Pancreas (tissue), 10 donors: ENCODE measurements at regions of chr9 and their contacts with region 1.

Region 1: DNA sequence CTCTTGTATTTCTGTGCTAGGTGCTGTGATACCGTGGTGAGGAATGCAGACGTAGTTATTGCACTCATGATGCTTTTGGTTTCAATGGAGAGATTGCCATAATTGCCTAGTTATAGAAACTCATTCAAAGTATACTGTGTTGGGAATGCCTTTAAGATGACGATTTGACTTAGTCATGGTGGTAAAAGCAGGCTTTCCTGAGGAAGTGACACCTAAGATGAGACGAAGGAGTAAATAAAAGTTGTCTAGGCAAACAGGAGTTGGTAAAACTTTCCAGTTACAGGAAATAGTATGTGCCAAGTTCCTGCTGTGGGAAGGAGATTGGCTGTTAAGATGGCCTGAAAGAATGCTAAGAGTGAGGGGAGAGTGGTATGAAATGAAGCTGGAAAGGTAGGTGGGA is 48.1 kb downstream of the FOCAD start:
- DNase-seq: no peak
- ATAC-seq: no peak
- H3K4me3 ChIP-seq: no peak overlapping the region
- H3K27ac ChIP-seq: no peak overlapping the region
- H3K4me1 ChIP-seq: no peaks in the 10 kb centered on the region
- H3K27me3 ChIP-seq: no peaks in the 10 kb centered on the region
- CTCF ChIP-seq: no peak

Region 2: DNA sequence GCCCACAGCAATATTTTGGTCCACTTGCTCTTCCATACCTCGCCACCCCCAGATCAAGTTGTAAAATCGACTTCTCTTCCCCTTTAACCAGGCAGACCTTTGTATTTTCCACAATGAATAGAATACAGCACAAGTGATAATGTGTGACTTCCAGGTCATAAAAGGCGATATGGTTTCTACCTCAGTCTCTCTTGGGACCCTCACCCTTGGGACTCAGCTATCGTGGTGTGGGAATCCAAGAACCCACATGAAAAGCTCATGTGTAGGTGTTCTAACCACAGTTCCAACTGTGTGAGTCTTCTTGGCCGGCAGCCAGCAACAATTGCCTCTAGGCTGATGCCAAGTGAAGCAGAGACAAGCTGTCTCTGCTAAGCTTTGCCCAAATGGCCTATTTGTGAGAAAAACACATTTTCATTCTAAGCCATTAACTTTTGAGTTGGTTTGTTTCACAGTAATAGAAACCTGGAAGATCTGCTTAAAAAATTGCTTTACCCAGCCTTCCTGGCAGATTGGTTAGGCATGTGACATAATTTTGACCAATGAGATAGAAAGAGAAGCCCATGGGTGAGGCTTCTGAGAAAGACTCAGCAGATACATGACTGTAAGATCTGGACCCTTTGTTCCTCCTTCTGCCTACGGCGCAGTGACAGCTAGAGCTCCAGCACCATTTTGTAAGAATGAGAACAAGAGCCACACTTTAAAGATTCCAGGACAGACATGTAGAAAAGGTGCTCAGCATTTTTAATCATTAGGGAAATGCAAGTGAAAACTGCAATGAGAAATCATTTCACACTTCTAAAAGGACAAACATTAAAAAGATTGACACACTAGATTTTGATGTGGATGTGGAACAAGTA is 91.6 kb before region 1 on chr9:
- intact Hi-C with region 1: no loop called
- DNase-seq: peak in 5 of 6 donors; percentile 31 to 82 (median 63)
- ATAC-seq: peak in 1 of 4 donors; percentile 58
- H3K4me3 ChIP-seq: no peak overlapping the region
- H3K27ac ChIP-seq: no peak overlapping the region
- H3K4me1 ChIP-seq: no peaks in the 10 kb centered on the region
- H3K27me3 ChIP-seq: no peaks in the 10 kb centered on the region
- CTCF ChIP-seq: no peak

Region 3: DNA sequence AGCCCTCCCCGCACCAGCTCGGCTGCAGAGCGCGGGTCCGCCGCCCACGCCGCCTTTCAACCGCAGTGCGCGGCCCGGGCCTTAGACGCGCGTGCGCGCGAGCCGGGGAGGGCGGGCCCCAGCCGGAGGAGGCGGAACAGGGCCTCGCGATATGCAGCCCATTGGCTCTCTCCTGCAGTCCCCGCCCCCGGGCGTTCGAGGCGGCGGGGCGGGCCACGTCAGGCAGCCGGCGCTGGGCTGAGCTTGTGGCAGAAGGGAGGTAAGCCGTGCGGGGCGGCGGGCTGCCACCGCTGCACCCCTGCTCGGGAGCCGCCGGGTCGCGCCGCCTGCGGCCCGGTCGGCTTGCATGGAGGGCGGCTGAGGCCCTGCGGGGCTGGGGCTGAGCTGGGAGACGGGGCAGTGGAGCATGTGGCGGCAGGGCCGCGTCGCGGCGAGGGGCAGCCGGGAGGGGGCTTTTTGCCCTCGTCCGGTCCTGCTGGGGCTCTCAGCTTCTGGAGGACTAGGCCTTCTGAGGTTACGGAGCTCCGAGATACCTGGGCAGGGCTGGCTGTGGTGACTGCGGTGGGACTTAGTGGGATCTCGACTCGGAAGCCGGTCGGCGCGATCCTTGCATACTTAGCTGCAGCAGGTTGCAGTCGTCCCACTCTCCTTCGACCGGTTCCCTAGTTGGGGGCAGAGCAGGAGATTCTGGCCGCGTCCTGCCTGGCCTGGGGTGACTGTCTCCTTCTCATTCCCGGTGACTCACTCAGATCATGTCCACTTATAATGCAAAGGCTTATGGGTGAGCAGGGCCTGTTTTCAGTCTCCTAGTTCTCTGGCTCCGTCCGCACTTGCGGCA is 47.9 kb before region 1 on chr9 and contains the start of gene FOCAD:
- intact Hi-C with region 1: loop called in 1 of 3 experiments (anchors 10 kb)
- DNase-seq: peak; percentile 94 to 98 (median 96)
- ATAC-seq: peak; percentile 95 to 99 (median 98)
- H3K4me3 ChIP-seq: peak within 1 kb of the TSS; percentile 75 to 96 (median 81)
- H3K27ac ChIP-seq: peak within 1 kb of the TSS; percentile 86 to 97 (median 89)
- H3K4me1 ChIP-seq: peaks cover 9 to 19% (median 15%) of the 10 kb centered on the region in 3 donors
- H3K27me3 ChIP-seq: no peaks in the 10 kb centered on the region
- CTCF ChIP-seq: no peak
- total RNA-seq, gene FOCAD: 15.8 to 27.7 (median 17.7) TPM